Thyroid gland (tissue), 4 donors: ENCODE measurements at regions of chr2 and their contacts with region 1.

Region 1: DNA sequence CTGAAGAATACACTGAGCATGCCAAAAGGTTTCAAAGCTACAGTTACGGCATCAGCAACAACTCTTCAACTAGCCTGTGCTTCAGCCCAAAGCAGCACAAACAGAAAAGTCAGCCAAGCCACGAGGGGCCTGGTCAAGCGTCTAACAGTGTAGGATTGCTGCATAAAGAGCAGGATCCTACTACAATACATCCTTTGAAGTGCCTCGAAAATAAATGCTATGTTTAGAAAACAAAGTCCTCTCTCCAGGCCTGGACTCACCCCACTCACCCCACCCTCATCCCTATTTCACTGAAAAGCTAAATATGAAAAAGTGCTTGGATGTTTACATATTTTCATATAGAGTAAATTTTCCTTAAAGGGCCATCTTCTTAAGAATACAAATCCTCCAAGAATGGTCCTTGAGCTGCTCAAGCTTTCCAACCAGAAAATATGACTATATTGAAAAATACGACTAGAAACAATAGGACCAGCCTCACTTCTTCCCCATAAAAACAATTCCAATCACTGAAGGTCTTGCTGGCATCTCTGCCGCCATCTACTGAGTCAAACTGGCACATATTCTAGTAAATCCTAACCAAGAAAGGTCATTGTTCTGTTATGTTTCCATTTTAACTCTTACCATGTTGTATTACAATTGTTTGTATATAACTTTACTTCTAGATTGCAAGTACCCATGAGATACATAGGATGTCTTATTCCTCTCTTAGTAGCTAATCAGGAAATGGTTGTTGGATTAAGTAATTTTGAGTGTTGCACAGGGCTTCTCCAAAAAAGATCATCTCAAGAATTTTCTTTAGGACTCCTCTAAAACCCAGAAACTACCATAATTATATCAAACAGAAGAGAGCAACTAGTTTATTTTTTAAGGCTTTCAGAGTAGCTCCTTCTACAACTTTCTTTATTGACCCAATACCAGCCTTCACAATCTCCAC is 63.6 kb downstream of the CLHC1 start:
- DNase-seq: peak; percentile 80 to 83
- H3K4me3 ChIP-seq: no peak overlapping the region
- H3K27ac ChIP-seq: peak overlapping the region; percentile 67 to 71 (median 68)
- H3K4me1 ChIP-seq: peaks cover 23 to 45% of the 10 kb centered on the region in 2 donors
- H3K27me3 ChIP-seq: no peaks in the 10 kb centered on the region
- CTCF ChIP-seq: peak in 5 of 6 experiments; percentile 80 to 93 (median 89)
- POLR2A ChIP-seq: no peak

Region 2: GRCh38 chr2:54866868-54867267 is 301.6 kb before region 1 on chr2:
- intact Hi-C with region 1: no loop called
- DNase-seq: no peak
- H3K4me3 ChIP-seq: no peak overlapping the region
- H3K27ac ChIP-seq: no peak overlapping the region
- H3K4me1 ChIP-seq: no peaks in the 10 kb centered on the region
- H3K27me3 ChIP-seq: no peaks in the 10 kb centered on the region
- CTCF ChIP-seq: no peak
- POLR2A ChIP-seq: no peak

Region 3: DNA sequence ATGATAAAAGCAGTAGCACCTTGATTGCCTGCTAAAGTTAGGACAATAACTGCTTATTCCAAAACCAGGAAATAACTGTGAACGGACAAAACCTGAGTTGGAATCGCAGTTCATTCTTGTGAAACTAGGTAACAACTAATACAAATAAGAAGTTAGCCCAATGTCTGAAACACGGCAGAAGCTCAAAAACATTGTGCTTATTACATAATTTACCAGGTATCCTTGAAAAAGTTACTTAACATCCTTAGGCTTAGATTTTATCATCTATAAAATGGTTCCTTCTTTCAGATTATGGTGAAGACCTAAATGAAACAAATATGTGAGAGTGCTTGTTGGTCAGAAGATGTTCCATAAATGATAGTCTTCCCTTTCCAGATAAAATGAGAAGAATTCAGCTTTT is 150.6 kb before region 1 on chr2:
- intact Hi-C with region 1: loop called (anchors 2 kb)
- DNase-seq: no peak
- H3K4me3 ChIP-seq: no peak overlapping the region
- H3K27ac ChIP-seq: no peak overlapping the region
- H3K4me1 ChIP-seq: peaks cover 18 to 19% of the 10 kb centered on the region in 2 donors
- H3K27me3 ChIP-seq: no peaks in the 10 kb centered on the region
- CTCF ChIP-seq: no peak
- POLR2A ChIP-seq: no peak

Region 4: DNA sequence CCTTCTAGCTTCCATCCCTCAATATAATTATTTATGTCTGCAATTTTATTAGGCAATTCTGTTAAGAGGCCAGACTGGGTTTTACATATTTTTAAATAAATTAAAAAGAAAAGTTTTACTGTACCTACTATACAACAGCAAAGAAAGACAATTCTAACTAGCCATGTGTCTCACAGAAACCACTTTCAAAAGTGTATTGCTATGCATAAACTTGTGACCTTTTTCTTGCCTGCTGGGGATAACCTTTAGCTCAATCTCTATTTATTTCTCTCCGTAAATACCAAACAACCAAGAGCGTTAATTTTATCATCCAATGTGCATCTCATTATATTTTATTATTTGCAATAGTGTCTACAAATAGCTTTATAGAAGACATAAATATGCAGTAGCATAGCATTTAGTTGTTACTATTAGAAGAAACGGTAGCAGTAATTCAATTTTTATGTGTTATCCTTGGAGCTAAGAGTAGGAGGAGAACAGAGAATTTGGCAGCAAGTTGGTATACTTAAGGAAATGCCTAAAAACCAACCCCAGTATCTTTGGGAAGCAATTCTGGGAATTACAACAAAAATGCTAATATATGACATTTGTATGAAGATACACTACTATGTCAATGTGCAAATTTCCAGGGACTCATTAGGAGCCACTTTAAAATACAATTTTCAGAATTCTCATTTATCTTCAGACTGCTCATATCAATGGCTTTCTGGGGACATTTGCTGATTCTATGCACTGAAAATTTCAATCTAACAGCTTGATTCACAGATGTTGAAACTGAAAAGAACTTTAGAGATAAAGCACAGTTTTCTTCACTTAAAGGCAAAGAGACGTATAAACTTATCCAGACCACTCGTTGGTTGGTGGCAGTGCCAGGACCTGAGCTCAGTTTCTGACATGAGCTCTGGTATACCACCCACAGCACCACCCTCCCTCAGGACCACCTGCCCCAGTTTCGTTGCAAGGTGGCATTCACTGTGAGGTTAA is 95.2 kb before region 1 on chr2:
- intact Hi-C with region 1: no loop called
- DNase-seq: no peak
- H3K4me3 ChIP-seq: no peak overlapping the region
- H3K27ac ChIP-seq: no peak overlapping the region
- H3K4me1 ChIP-seq: no peaks in the 10 kb centered on the region
- H3K27me3 ChIP-seq: no peaks in the 10 kb centered on the region
- CTCF ChIP-seq: no peak
- POLR2A ChIP-seq: no peak

Region 5: GRCh38 chr2:55084641-55085040 is 83.8 kb before region 1 on chr2:
- intact Hi-C with region 1: no loop called
- DNase-seq: no peak
- H3K4me3 ChIP-seq: no peak overlapping the region
- H3K27ac ChIP-seq: no peak overlapping the region
- H3K4me1 ChIP-seq: peaks cover 3 to 4% of the 10 kb centered on the region in 2 donors
- H3K27me3 ChIP-seq: no peaks in the 10 kb centered on the region
- CTCF ChIP-seq: no peak
- POLR2A ChIP-seq: no peak

Region 6: DNA sequence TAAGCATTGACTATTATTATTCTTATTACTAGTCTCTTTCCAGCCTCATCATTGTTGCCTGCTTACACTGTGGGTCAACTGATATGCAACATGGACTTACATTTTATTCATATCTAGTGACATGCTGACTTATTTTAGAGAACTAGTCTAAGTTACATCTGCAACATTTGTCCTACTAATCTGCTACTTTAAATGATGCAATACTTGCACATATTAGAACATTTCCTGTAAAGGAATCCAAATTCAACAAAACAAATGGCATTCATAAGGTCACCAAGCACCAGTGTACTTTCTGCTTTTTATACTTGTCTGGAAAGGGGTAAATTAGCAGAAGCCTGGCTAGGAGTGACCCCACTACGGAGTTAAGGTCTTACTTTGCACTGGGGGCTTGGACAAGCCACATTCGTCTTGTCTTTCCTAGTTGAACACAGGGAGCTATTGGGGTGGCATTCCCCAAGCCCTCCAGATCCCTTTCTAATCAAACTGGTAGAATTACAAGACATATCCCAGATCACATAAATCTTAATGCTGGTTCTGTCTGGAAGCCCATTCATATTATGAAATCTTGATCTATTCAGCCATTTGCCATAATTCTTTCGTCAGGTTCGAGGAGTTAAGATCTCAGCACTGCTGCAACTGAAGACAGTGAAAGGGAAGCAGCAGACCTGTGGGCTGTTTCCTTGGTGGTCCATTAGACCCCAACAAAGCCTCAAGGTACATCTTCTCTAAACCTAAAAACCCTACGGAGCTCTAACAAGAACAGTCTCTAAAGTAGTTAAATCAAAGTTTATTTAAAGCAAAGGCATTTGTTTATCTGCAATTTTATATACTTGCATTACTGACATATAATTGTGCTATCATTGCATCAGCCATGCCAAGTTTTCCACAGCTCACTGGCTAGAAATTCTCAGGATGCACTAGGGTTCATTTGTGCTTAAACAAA is 68.3 kb before region 1 on chr2:
- intact Hi-C with region 1: loop called (anchors 10 kb)
- DNase-seq: no peak
- H3K4me3 ChIP-seq: no peak overlapping the region
- H3K27ac ChIP-seq: peak overlapping the region; percentile 22 to 59 (median 54)
- H3K4me1 ChIP-seq: peaks cover 23 to 37% of the 10 kb centered on the region in 2 donors
- H3K27me3 ChIP-seq: no peaks in the 10 kb centered on the region
- CTCF ChIP-seq: no peak
- POLR2A ChIP-seq: no peak

Region 7: DNA sequence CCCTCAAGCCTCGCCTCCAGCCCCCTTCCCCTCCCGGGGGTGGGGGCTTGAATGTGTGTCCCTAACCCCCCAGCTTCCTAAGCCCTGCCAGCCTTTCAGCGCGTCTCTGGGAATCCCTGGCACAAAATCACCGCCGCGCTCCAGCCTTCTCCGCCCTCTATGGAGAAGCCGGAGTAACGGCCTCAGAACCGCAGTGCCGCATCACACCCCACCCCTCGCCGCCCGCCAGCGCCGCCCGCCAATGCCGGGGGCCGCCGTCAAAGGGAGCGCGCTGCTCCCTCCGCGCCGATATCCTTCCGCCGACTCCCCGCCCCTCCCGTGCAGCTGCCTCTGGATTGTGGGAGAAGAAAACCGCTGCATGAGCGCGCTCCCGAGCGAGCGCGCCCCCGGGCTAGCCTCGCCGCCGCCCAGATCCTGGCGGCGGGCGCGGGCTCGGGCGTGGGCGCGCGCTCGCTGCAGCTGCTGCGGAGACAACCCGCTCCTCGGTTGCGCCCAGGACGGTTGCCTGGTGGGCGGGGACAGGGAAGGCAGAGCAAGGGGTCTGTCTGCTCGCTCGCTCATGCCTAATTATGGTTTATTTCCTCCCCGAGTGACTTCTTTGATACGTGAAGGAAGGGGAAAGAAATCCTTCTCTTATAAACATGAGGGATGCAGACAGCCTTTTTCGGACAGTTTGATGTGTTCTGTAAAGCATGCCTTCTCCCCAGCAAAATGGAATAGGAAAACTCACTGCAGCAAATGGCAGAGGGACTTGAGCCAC is 251.4 kb after region 1 on chr2 and contains the start of gene CCDC88A:
- intact Hi-C with region 1: no loop called
- DNase-seq: peak; percentile 92 to 94
- H3K4me3 ChIP-seq: peak within 1 kb of the TSS; percentile 65 to 86 (median 72)
- H3K27ac ChIP-seq: peak within 1 kb of the TSS; percentile 62 to 81 (median 76)
- H3K4me1 ChIP-seq: peaks cover 5 to 6% of the 10 kb centered on the region in 2 donors
- H3K27me3 ChIP-seq: no peaks in the 10 kb centered on the region
- CTCF ChIP-seq: peak in 3 of 6 experiments; percentile 16 to 38 (median 31)
- POLR2A ChIP-seq: peak in 1 of 2 donors; percentile 73
- total RNA-seq, gene CCDC88A: 35.9 to 51.5 (median 42.5) TPM